CD4-positive, alpha-beta memory T cell (primary cell): ENCODE measurements at regions of chr1 and their contacts with region 1.

Region 1: DNA sequence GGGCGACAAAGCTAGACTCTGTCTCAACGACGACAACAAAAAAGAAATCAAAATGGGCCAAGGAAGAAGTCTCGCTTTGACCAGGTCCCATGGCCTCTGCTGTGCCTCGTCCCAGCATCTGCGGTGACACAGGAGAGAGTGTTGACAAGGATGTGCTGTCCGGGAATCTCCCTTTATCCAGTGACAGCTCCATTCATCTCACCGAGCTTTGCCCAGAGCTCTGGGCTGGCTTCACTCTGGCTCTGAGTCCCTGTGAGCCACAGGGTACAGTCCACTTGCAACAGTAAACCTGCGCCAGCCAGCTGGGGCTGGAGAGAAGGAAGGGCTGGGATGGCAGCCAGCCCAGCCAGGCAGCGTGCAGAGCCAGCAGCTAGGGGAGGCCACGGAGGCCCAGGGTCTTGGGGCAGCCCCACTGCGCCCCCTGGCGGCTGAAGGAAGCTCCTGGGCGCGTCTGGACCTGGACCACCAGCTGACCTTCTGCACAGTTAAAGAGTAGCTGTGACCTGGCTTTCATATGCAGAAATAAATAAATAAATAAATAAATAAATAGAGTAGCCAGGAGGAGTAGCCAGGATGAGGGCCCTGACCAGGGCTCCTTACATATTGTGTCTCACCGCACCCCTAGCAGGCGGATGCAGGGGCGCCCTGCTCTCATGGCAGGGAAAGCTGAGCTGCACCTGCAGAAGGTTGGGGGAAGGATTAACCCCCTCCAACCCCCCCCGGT is 29.7 kb downstream of the ENO1 start:
- DNase-seq: peak; percentile 57 to 66 (median 64)
- H3K4me3 ChIP-seq: no peak overlapping the region
- H3K4me3 Mint-ChIP-seq: no peak overlapping the region
- H3K27ac ChIP-seq: no peak overlapping the region
- H3K27ac Mint-ChIP-seq: no peak overlapping the region
- H3K4me1 ChIP-seq: no peaks in the 10 kb centered on the region
- H3K4me1 Mint-ChIP-seq: peaks cover 0 to 2% (median 0%) of the 10 kb centered on the region in 4 donors
- H3K27me3 ChIP-seq: no peaks in the 10 kb centered on the region
- H3K27me3 Mint-ChIP-seq: no peaks in the 10 kb centered on the region

Region 2: DNA sequence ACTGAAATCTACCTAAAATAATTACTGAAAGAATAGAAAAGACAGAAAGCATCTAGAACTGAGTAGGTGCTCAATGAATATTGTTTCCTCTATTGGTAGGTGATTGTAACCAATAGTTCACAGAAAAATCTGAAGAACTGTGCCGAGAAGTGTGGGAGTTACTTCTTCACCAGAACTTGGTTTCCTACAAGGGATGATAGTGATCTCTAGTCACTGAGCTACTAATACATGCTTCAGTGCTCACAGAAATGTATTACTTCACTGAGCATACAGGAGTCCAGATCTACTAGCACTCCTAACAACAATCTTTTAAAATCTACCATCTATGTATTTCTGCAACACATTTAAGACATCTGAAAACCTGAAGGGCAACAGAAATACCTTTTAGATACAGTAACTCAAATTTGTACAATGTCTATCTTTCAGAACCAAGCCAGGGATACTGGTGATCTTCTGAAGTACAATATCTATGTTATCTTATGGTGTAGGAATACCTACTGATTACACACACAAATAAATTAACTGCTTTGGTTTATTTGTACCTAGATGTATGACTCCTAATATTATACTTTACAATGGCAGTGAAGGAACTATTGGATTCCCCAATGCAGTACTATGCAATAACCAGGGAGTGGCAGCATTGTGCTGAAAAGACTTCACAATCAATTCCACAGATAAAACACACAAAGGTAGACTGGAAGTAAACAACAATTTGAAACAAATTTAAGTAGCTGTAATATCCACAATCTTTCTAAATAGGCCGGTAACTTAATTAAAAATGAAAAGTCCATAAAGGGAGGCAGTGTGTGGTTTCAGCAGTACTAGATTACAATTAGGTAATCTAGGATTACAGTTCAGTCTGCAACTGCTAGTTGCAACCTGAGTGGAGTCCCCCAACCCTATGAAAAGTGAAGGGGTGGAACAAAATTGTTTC is 287.9 kb before region 1 on chr1:
- CTCF ChIA-PET with region 1: interaction called, 84 read pairs
- POLR2A ChIA-PET with region 1: no interaction called
- intact Hi-C with region 1: loop called (anchors 1 kb)
- DNase-seq: peak; percentile 45 to 56 (median 51)
- H3K4me3 ChIP-seq: no peak overlapping the region
- H3K4me3 Mint-ChIP-seq: no peak overlapping the region
- H3K27ac ChIP-seq: no peak overlapping the region
- H3K27ac Mint-ChIP-seq: peak overlapping the region in 2 of 7 donors; percentile 3 to 39
- H3K4me1 ChIP-seq: no peaks in the 10 kb centered on the region
- H3K4me1 Mint-ChIP-seq: peaks cover 2 to 7% (median 5%) of the 10 kb centered on the region in 4 donors
- H3K27me3 ChIP-seq: no peaks in the 10 kb centered on the region
- H3K27me3 Mint-ChIP-seq: no peaks in the 10 kb centered on the region

Region 3: GRCh38 chr1:8671306-8671917 is 177.4 kb before region 1 on chr1:
- CTCF ChIA-PET with region 1: interaction called, 11 read pairs
- POLR2A ChIA-PET with region 1: no interaction called
- intact Hi-C with region 1: no loop called
- DNase-seq: peak in 4 of 5 donors; percentile 12 to 34 (median 25)
- H3K4me3 ChIP-seq: no peak overlapping the region
- H3K4me3 Mint-ChIP-seq: no peak overlapping the region
- H3K27ac ChIP-seq: no peak overlapping the region
- H3K27ac Mint-ChIP-seq: peak overlapping the region in 1 of 7 donors; percentile 60
- H3K4me1 ChIP-seq: peaks cover 24% of the 10 kb centered on the region
- H3K4me1 Mint-ChIP-seq: peaks cover 15 to 31% (median 20%) of the 10 kb centered on the region in 4 donors
- H3K27me3 ChIP-seq: no peaks in the 10 kb centered on the region
- H3K27me3 Mint-ChIP-seq: no peaks in the 10 kb centered on the region

Region 4: GRCh38 chr1:8727809-8728213 is 121.0 kb before region 1 on chr1:
- CTCF ChIA-PET with region 1: interaction called, 43 read pairs
- POLR2A ChIA-PET with region 1: no interaction called
- intact Hi-C with region 1: loop called (anchors 2 kb)
- DNase-seq: no peak
- H3K4me3 ChIP-seq: no peak overlapping the region
- H3K4me3 Mint-ChIP-seq: no peak overlapping the region
- H3K27ac ChIP-seq: no peak overlapping the region
- H3K27ac Mint-ChIP-seq: no peak overlapping the region
- H3K4me1 ChIP-seq: peaks cover 7% of the 10 kb centered on the region
- H3K4me1 Mint-ChIP-seq: peaks cover 3 to 12% (median 6%) of the 10 kb centered on the region in 4 donors
- H3K27me3 ChIP-seq: no peaks in the 10 kb centered on the region
- H3K27me3 Mint-ChIP-seq: no peaks in the 10 kb centered on the region

Region 5: DNA sequence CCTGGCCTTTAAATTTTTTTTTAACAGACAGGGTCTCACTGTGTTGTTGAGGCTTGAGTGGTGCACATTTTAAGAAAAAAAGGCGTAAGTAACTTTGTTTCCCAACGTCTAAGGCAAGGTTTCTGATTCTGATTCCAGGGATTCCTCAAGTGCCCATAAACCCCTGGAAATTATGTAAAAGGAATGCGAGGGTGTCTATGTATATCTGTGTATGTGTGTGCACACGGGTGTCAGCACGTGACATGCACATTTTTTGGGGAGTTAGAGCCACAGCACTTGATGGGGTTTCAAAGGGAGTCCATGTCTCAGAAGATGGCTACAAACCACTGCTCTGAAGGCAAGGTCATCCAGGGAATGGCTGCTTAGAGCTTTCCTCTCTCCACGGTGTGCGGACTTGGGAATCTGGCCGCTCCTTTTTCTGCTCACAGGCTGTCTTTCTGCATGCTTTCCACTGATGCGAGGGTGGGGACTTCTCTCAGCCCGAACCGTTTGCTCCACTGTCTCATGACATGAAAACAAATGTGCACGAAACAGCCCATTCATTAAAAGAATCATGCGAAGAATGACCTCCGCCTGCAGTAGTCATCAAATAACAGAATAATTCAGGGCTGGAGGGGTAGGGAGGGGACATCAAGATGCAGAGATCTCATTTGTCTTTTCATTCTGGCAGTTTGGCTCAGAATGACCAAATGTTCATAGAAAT is 12.7 kb before region 1 on chr1:
- CTCF ChIA-PET with region 1: interaction called, 29 read pairs
- POLR2A ChIA-PET with region 1: no interaction called
- intact Hi-C with region 1: no loop called
- DNase-seq: no peak
- H3K4me3 ChIP-seq: no peak overlapping the region
- H3K4me3 Mint-ChIP-seq: no peak overlapping the region
- H3K27ac ChIP-seq: no peak overlapping the region
- H3K27ac Mint-ChIP-seq: no peak overlapping the region
- H3K4me1 ChIP-seq: no peaks in the 10 kb centered on the region
- H3K4me1 Mint-ChIP-seq: no peaks in the 10 kb centered on the region
- H3K27me3 ChIP-seq: no peaks in the 10 kb centered on the region
- H3K27me3 Mint-ChIP-seq: no peaks in the 10 kb centered on the region

Region 6: GRCh38 chr1:8866792-8867415 is 18.1 kb after region 1 on chr1:
- CTCF ChIA-PET with region 1: interaction called, 123 read pairs
- POLR2A ChIA-PET with region 1: no interaction called
- intact Hi-C with region 1: no loop called
- DNase-seq: no peak
- H3K4me3 ChIP-seq: no peak overlapping the region
- H3K4me3 Mint-ChIP-seq: no peak overlapping the region
- H3K27ac ChIP-seq: no peak overlapping the region
- H3K27ac Mint-ChIP-seq: peak overlapping the region in 2 of 7 donors; percentile 72 to 73
- H3K4me1 ChIP-seq: peaks cover 2% of the 10 kb centered on the region
- H3K4me1 Mint-ChIP-seq: peaks cover 10 to 31% (median 17%) of the 10 kb centered on the region in 4 donors
- H3K27me3 ChIP-seq: no peaks in the 10 kb centered on the region
- H3K27me3 Mint-ChIP-seq: no peaks in the 10 kb centered on the region

Region 7: GRCh38 chr1:8891401-8891800 is 42.6 kb after region 1 on chr1:
- CTCF ChIA-PET with region 1: interaction called, 10 read pairs
- POLR2A ChIA-PET with region 1: no interaction called
- intact Hi-C with region 1: no loop called
- DNase-seq: no peak
- H3K4me3 ChIP-seq: no peak overlapping the region
- H3K4me3 Mint-ChIP-seq: no peak overlapping the region
- H3K27ac ChIP-seq: no peak overlapping the region
- H3K27ac Mint-ChIP-seq: no peak overlapping the region
- H3K4me1 ChIP-seq: no peaks in the 10 kb centered on the region
- H3K4me1 Mint-ChIP-seq: no peaks in the 10 kb centered on the region
- H3K27me3 ChIP-seq: no peaks in the 10 kb centered on the region
- H3K27me3 Mint-ChIP-seq: no peaks in the 10 kb centered on the region

Region 8: GRCh38 chr1:8970870-8971337 is 122.1 kb after region 1 on chr1:
- CTCF ChIA-PET with region 1: no interaction called
- POLR2A ChIA-PET with region 1: no interaction called
- intact Hi-C with region 1: no loop called
- DNase-seq: peak; percentile 59 to 74 (median 66)
- H3K4me3 ChIP-seq: peak overlapping the region; percentile 14 to 19
- H3K4me3 Mint-ChIP-seq: peak overlapping the region; percentile 83 to 96 (median 92)
- H3K27ac ChIP-seq: peak overlapping the region; percentile 45
- H3K27ac Mint-ChIP-seq: peak overlapping the region; percentile 73 to 97 (median 93)
- H3K4me1 ChIP-seq: peaks cover 31% of the 10 kb centered on the region
- H3K4me1 Mint-ChIP-seq: peaks cover 27 to 68% (median 39%) of the 10 kb centered on the region in 4 donors
- H3K27me3 ChIP-seq: no peaks in the 10 kb centered on the region
- H3K27me3 Mint-ChIP-seq: no peaks in the 10 kb centered on the region

Region 9: GRCh38 chr1:9643351-9644256 is 794.8 kb after region 1 on chr1:
- CTCF ChIA-PET with region 1: no interaction called
- POLR2A ChIA-PET with region 1: no interaction called
- intact Hi-C with region 1: no loop called
- DNase-seq: peak in 1 of 5 donors; percentile 9
- H3K4me3 ChIP-seq: no peak overlapping the region
- H3K4me3 Mint-ChIP-seq: peak overlapping the region in 7 of 8 donors; percentile 47 to 81 (median 62)
- H3K27ac ChIP-seq: no peak overlapping the region
- H3K27ac Mint-ChIP-seq: peak overlapping the region; percentile 57 to 85 (median 78)
- H3K4me1 ChIP-seq: peaks cover 39% of the 10 kb centered on the region
- H3K4me1 Mint-ChIP-seq: peaks cover 33 to 71% (median 49%) of the 10 kb centered on the region in 4 donors
- H3K27me3 ChIP-seq: no peaks in the 10 kb centered on the region
- H3K27me3 Mint-ChIP-seq: no peaks in the 10 kb centered on the region